HEK293 (cell line): ENCODE measurements at regions of chr18 and their contacts with region 1.

Region 1: GRCh38 chr18:824179-824578 is 12.1 kb upstream of the YES1 start:
- H3K4me3 ChIP-seq: no peak overlapping the region
- H3K27ac ChIP-seq: no peak overlapping the region
- H3K4me1 ChIP-seq: no peaks in the 10 kb centered on the region
- CTCF ChIP-seq: no peak

Region 2: GRCh38 chr18:712401-713134 is 111.6 kb before region 1 on chr18 and contains the start of gene ENOSF1:
- CTCF ChIA-PET with region 1: interaction called, 10 read pairs
- POLR2A ChIA-PET with region 1: no interaction called
- H3K4me3 ChIP-seq: peak within 1 kb of the TSS; percentile 48
- H3K27ac ChIP-seq: peak within 1 kb of the TSS; percentile 69
- H3K4me1 ChIP-seq: peaks cover 4% of the 10 kb centered on the region
- CTCF ChIP-seq: peak; percentile 73

Region 3: GRCh38 chr18:741931-742512 is 82.2 kb before region 1 on chr18:
- CTCF ChIA-PET with region 1: interaction called, 230 read pairs
- POLR2A ChIA-PET with region 1: no interaction called
- H3K4me3 ChIP-seq: no peak overlapping the region
- H3K27ac ChIP-seq: no peak overlapping the region
- H3K4me1 ChIP-seq: no peaks in the 10 kb centered on the region
- CTCF ChIP-seq: peak; percentile 65; the same call in 1 of the 2 replicates

Region 4: DNA sequence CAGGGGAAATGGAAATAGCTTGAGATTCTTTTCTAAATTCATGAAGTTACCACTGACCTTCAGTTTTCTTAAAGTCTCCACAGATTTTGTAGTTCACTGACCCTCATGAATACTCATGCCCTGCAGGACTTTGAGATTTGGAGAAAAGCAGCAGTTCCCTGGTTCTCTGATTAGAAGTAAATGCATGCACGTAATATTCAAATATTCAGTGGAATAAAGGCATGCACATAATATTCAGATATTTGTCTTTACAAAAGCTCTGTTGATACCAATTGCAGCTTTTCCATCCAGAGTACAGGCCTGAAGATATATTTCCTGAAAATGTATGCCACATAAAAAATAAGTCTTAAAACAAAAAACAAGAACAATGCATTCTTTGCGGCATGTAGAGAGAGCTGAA is 300.3 kb after region 1 on chr18:
- CTCF ChIA-PET with region 1: no interaction called
- POLR2A ChIA-PET with region 1: no interaction called
- H3K4me3 ChIP-seq: no peak overlapping the region
- H3K27ac ChIP-seq: no peak overlapping the region
- H3K4me1 ChIP-seq: no peaks in the 10 kb centered on the region
- CTCF ChIP-seq: no peak